Breast epithelium (tissue), 4 donors: ENCODE measurements at regions of chr1 and their contacts with region 1.

Region 1: DNA sequence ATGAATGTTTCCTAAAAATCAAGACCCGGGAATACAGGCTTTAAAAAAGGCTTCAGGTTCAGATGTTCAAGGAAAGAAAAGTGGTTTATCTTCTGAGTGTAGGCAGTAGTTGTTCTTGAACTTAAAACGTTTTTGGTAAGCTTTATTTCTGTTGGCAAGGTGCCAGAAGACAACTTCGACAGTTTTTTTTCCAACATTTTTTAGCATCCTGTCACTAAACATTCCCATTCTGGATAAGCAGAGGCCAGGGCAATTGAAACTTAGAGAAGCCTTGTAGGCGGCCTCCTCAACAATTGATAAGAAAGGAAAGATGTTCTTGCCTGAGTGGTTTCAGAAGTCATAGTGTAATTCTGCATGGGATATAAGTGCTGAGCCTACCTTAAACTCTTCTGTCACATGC is 66.7 kb downstream of the PATJ start:
- DNase-seq: no peak
- H3K4me3 ChIP-seq: no peak overlapping the region
- H3K27ac ChIP-seq: no peak overlapping the region
- H3K4me1 ChIP-seq: no peaks in the 10 kb centered on the region
- H3K27me3 ChIP-seq: no peaks in the 10 kb centered on the region
- CTCF ChIP-seq: no peak
- POLR2A ChIP-seq: no peak

Region 2: DNA sequence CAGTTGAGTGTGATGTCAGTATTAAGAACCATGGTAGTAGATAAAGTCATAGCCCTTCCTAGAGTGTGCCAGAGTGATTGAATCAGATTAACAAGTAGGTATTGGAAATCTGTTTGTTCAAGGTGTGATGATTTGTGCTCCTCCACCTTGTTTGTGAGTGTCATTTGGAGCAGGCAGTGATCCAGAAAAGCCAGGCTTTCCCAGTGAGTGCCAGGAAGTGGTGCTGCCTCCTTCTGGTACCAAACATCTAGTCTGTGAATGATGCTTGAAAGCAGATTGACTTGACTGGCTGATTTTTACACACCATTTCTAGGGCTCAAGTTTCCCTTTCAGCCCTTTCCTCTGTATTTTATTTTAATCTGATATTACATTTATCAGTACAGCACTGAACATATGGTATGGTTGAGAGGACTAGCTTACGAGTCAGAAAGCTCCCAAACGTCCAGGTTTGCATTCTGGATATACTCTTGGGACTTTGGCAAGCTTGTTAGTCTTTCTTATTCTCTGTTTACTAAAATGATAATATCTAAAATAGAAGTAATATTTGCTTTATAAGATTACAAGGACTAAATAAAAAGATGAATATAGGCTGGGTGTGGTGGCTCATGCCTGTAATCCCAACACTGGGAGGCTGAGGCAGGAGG is 34.0 kb after region 1 on chr1:
- intact Hi-C with region 1: no loop called
- DNase-seq: no peak
- H3K4me3 ChIP-seq: no peak overlapping the region
- H3K27ac ChIP-seq: no peak overlapping the region
- H3K4me1 ChIP-seq: no peaks in the 10 kb centered on the region
- H3K27me3 ChIP-seq: no peaks in the 10 kb centered on the region
- CTCF ChIP-seq: peak in 1 of 3 donors; percentile 26
- POLR2A ChIP-seq: no peak

Region 3: GRCh38 chr1:61869691-61870109 is 60.7 kb after region 1 on chr1:
- intact Hi-C with region 1: loop called (anchors 10 kb)
- DNase-seq: no peak
- H3K4me3 ChIP-seq: no peak overlapping the region
- H3K27ac ChIP-seq: no peak overlapping the region
- H3K4me1 ChIP-seq: no peaks in the 10 kb centered on the region
- H3K27me3 ChIP-seq: no peaks in the 10 kb centered on the region
- CTCF ChIP-seq: no peak
- POLR2A ChIP-seq: no peak